ENCODE measurements at regions of chr11 and their contacts with region 1.

Region 1: DNA sequence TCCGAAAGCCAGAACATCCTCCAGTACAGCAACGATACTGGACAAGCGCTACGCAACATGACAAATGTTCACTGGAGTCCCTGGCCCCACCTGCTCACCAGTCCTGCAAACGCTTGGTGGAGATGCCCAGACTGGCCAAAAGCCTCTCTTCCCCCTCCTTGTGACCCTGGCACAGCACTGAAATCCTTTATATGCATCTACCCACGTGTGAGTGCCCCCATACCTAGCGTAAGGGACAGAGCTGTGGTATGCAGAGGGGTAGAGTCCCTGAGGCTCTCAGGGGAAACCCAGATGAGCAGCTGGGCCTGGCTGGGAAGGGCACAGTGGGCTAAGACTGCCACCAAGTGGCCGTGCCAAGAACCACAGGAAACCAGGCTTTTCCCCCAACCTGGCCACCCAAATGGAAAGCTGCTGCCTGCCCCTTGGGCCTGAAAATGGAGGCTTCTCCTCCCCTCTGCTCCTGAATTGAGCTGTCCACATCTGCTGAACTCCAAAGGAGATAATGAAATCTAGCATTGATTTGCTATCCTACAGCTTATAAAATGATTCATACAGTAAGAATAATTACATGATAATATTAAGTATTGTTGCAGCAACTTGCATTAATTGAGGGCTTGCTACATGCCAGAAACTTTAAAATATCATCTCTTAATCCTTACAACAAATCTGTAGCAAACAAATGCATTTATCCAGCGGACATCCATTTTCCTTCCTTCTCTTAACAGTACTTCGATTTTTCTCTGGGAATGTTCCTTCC is 24.8 kb upstream of the TTC12 start:
- DNase-seq: peak; percentile 59 to 65 (median 62)
- H3K4me3 ChIP-seq: no peak overlapping the region
- H3K4me3 Mint-ChIP-seq: no peak overlapping the region
- H3K27ac ChIP-seq: no peak overlapping the region
- H3K27ac Mint-ChIP-seq: no peak overlapping the region
- H3K4me1 ChIP-seq: no peaks in the 10 kb centered on the region
- H3K4me1 Mint-ChIP-seq: no peaks in the 10 kb centered on the region
- H3K27me3 ChIP-seq: no peaks in the 10 kb centered on the region
- H3K27me3 Mint-ChIP-seq: peaks cover 4% of the 10 kb centered on the region in 2 donors

Region 2: GRCh38 chr11:112219476-112220232 is 1070.0 kb before region 1 on chr11:
- CTCF ChIA-PET with region 1: interaction called, 19 read pairs
- POLR2A ChIA-PET with region 1: no interaction called
- intact Hi-C with region 1: no loop called
- DNase-seq: peak; percentile 66 to 73 (median 71)
- H3K4me3 ChIP-seq: no peak overlapping the region
- H3K4me3 Mint-ChIP-seq: peak overlapping the region in 1 of 8 donors; percentile 13
- H3K27ac ChIP-seq: no peak overlapping the region
- H3K27ac Mint-ChIP-seq: peak overlapping the region in 3 of 7 donors; percentile 36 to 62 (median 42)
- H3K4me1 ChIP-seq: no peaks in the 10 kb centered on the region
- H3K4me1 Mint-ChIP-seq: peaks cover 0 to 5% (median 4%) of the 10 kb centered on the region in 4 donors
- H3K27me3 ChIP-seq: no peaks in the 10 kb centered on the region
- H3K27me3 Mint-ChIP-seq: no peaks in the 10 kb centered on the region

Region 3: GRCh38 chr11:112289588-112290492 is 999.8 kb before region 1 on chr11:
- CTCF ChIA-PET with region 1: interaction called, 24 read pairs
- POLR2A ChIA-PET with region 1: no interaction called
- intact Hi-C with region 1: loop called (anchors 1 kb)
- DNase-seq: peak; percentile 83 to 87 (median 86)
- H3K4me3 ChIP-seq: peak overlapping the region in 1 of 2 donors; percentile 35
- H3K4me3 Mint-ChIP-seq: peak overlapping the region; percentile 74 to 90 (median 86)
- H3K27ac ChIP-seq: peak overlapping the region; percentile 50
- H3K27ac Mint-ChIP-seq: peak overlapping the region; percentile 43 to 88 (median 73)
- H3K4me1 ChIP-seq: peaks cover 19% of the 10 kb centered on the region
- H3K4me1 Mint-ChIP-seq: peaks cover 11 to 34% (median 23%) of the 10 kb centered on the region in 4 donors
- H3K27me3 ChIP-seq: no peaks in the 10 kb centered on the region
- H3K27me3 Mint-ChIP-seq: no peaks in the 10 kb centered on the region

Region 4: DNA sequence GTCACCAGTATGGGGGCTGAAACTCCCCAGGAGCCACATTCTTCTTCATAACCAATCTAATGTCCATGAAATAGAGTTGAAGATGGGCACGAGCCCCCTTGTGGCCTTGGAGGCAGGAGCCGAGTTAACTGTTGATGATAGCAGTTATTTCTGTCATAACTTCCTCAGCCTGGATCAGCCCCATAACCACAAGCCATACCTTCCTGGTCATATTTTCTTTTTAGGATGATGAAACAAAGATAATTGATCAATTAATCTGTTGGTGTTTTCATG is 40.2 kb before region 1 on chr11:
- CTCF ChIA-PET with region 1: no interaction called
- POLR2A ChIA-PET with region 1: no interaction called
- intact Hi-C with region 1: no loop called
- DNase-seq: no peak
- H3K4me3 ChIP-seq: no peak overlapping the region
- H3K4me3 Mint-ChIP-seq: no peak overlapping the region
- H3K27ac ChIP-seq: no peak overlapping the region
- H3K27ac Mint-ChIP-seq: no peak overlapping the region
- H3K4me1 ChIP-seq: no peaks in the 10 kb centered on the region
- H3K4me1 Mint-ChIP-seq: peaks cover 0 to 7% (median 2%) of the 10 kb centered on the region in 4 donors
- H3K27me3 ChIP-seq: no peaks in the 10 kb centered on the region
- H3K27me3 Mint-ChIP-seq: peaks cover 11 to 18% of the 10 kb centered on the region in 2 donors

Region 5: GRCh38 chr11:113334183-113334582 is 44.6 kb after region 1 on chr11:
- CTCF ChIA-PET with region 1: no interaction called
- POLR2A ChIA-PET with region 1: no interaction called
- intact Hi-C with region 1: no loop called
- DNase-seq: no peak
- H3K4me3 ChIP-seq: no peak overlapping the region
- H3K4me3 Mint-ChIP-seq: no peak overlapping the region
- H3K27ac ChIP-seq: no peak overlapping the region
- H3K27ac Mint-ChIP-seq: no peak overlapping the region
- H3K4me1 ChIP-seq: no peaks in the 10 kb centered on the region
- H3K4me1 Mint-ChIP-seq: peaks cover 0 to 2% (median 0%) of the 10 kb centered on the region in 4 donors
- H3K27me3 ChIP-seq: no peaks in the 10 kb centered on the region
- H3K27me3 Mint-ChIP-seq: no peaks in the 10 kb centered on the region